ENCODE measurements at regions of chr13 and their contacts with region 1.

Region 1: GRCh38 chr13:22929381-22930126 is 251.2 kb upstream of the SGCG start:
- DNase-seq: no peak

Region 2: DNA sequence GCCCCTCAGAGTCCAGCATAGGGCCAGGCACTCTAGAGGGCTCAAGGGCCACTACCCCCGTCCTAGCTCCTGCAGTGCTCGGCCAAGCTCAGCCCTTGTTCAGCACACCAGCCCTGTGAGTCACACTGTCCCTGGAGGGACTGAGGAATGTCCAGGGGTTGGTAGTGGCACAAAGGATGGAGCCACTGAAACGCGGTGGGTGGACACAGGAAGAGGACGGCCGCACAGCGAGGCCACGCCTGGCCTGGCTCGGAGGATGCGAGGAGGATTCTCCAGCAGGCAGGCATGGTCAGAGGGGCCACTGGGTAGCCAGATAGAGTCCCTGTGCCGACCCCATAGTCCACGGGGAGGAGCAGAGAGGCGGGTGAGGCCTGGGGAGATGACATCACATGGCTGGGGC is 1425.5 kb after region 1 on chr13:
- intact Hi-C with region 1: loop called in 1 of 2 experiments (anchors 10 kb)
- DNase-seq: no peak